ENCODE measurements at regions of chr1 and their contacts with region 1.

Region 1: GRCh38 chr1:32939655-32940371 is 24.8 kb downstream of the RNF19B start:
- DNase-seq: no peak

Region 2: GRCh38 chr1:33007190-33008050 is 67.6 kb after region 1 on chr1:
- intact Hi-C with region 1: loop called (anchors 10 kb)
- DNase-seq: peak in 35 of 42 donors; percentile 23 to 87 (median 55)